ENCODE measurements at regions of chr17 and their contacts with region 1.

Region 1: GRCh38 chr17:35849469-35850348 is 19.0 kb downstream of the HEATR9 start:
- DNase-seq: peak; percentile 84
- ATAC-seq: peak; percentile 92
- H3K4me3 Mint-ChIP-seq: no peak overlapping the region
- H3K27ac Mint-ChIP-seq: peak overlapping the region; percentile 61
- H3K4me1 Mint-ChIP-seq: peaks cover 22% of the 10 kb centered on the region
- H3K27me3 Mint-ChIP-seq: no peaks in the 10 kb centered on the region

Region 2: GRCh38 chr17:35774499-35774898 is 75.2 kb before region 1 on chr17:
- CTCF ChIA-PET with region 1: no interaction called
- POLR2A ChIA-PET with region 1: no interaction called
- DNase-seq: no peak
- ATAC-seq: no peak
- H3K4me3 Mint-ChIP-seq: no peak overlapping the region
- H3K27ac Mint-ChIP-seq: no peak overlapping the region
- H3K4me1 Mint-ChIP-seq: no peaks in the 10 kb centered on the region
- H3K27me3 Mint-ChIP-seq: peaks cover 21% of the 10 kb centered on the region

Region 3: GRCh38 chr17:35879773-35880654 is 30.3 kb after region 1 on chr17 and contains the start of gene CCL5:
- CTCF ChIA-PET with region 1: interaction called, 49 read pairs
- POLR2A ChIA-PET with region 1: interaction called, 5 read pairs
- DNase-seq: peak; percentile 83
- ATAC-seq: peak; percentile 80
- H3K4me3 Mint-ChIP-seq: peak within 1 kb of the TSS; percentile 90
- H3K27ac Mint-ChIP-seq: peak within 1 kb of the TSS; percentile 96
- H3K4me1 Mint-ChIP-seq: peaks cover 65% of the 10 kb centered on the region
- H3K27me3 Mint-ChIP-seq: no peaks in the 10 kb centered on the region
- total RNA-seq, gene CCL5: 275 to 301 TPM

Region 4: DNA sequence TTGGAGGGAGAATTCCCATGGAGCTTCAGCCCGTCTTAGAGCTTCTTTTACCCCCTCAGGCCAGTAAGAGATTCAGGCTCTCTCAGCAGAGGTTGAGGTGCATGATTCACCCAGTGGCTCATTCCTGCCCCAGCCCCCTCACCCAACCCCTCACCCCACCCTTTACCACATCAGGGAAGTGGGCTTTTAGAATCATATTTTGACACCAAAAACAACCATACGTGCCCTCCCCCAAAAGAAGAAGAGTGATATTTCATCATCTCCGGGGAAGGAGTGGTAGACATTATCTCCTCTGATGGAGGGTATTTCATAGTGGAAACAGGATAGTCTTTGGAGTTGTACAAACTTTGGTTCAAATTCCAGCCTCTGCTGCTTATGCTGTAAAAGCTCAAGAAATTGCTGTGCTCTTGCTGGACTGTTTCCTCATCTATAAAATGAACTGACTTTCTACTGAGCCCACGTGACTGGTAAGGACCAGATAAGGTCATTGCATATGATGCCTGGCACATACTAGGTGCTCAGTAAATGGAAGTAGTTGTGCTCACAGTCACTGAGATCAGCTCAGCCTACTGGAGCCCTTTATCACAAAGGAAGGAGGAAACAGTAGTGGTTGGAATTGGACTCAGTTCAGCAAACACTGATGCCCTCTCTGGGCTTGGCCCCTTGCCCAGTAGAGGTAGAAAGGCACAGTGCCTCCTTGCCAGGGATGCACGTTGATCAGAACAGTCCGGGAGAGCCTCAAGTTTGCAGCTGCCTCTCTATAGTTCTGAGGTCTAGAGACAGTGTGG is 48.8 kb after region 1 on chr17:
- CTCF ChIA-PET with region 1: interaction called, 14 read pairs
- POLR2A ChIA-PET with region 1: interaction called, 4 read pairs
- DNase-seq: peak; percentile 78
- ATAC-seq: peak; percentile 37
- H3K4me3 Mint-ChIP-seq: peak overlapping the region; percentile 43
- H3K27ac Mint-ChIP-seq: peak overlapping the region; percentile 77
- H3K4me1 Mint-ChIP-seq: peaks cover 84% of the 10 kb centered on the region
- H3K27me3 Mint-ChIP-seq: no peaks in the 10 kb centered on the region

Region 5: GRCh38 chr17:35930211-35931065 is 80.7 kb after region 1 on chr17 and contains the start of gene RDM1:
- CTCF ChIA-PET with region 1: interaction called, 12 read pairs
- POLR2A ChIA-PET with region 1: interaction called, 4 read pairs
- DNase-seq: peak; percentile 94
- ATAC-seq: peak; percentile 98
- H3K4me3 Mint-ChIP-seq: peak within 1 kb of the TSS; percentile 86
- H3K27ac Mint-ChIP-seq: peak within 1 kb of the TSS; percentile 85
- H3K4me1 Mint-ChIP-seq: peaks cover 37% of the 10 kb centered on the region
- H3K27me3 Mint-ChIP-seq: peaks cover 8% of the 10 kb centered on the region
- total RNA-seq, gene RDM1: 13.9 to 14.4 TPM

Region 6: GRCh38 chr17:36072431-36073121 is 222.9 kb after region 1 on chr17:
- CTCF ChIA-PET with region 1: interaction called, 37 read pairs
- POLR2A ChIA-PET with region 1: no interaction called
- DNase-seq: peak; percentile 80
- ATAC-seq: peak; percentile 85
- H3K4me3 Mint-ChIP-seq: no peak overlapping the region
- H3K27ac Mint-ChIP-seq: no peak overlapping the region
- H3K4me1 Mint-ChIP-seq: peaks cover 25% of the 10 kb centered on the region
- H3K27me3 Mint-ChIP-seq: peaks cover 9% of the 10 kb centered on the region